ENCODE measurements at regions of chr12 and their contacts with region 1.

Region 1: GRCh38 chr12:11836282-11837151 is 187.0 kb downstream of the ETV6 start:
- DNase-seq: peak; percentile 88
- H3K4me3 Mint-ChIP-seq: peak overlapping the region; percentile 54
- H3K27ac Mint-ChIP-seq: peak overlapping the region; percentile 98
- H3K4me1 Mint-ChIP-seq: peaks cover 85% of the 10 kb centered on the region
- H3K27me3 Mint-ChIP-seq: no peaks in the 10 kb centered on the region

Region 2: DNA sequence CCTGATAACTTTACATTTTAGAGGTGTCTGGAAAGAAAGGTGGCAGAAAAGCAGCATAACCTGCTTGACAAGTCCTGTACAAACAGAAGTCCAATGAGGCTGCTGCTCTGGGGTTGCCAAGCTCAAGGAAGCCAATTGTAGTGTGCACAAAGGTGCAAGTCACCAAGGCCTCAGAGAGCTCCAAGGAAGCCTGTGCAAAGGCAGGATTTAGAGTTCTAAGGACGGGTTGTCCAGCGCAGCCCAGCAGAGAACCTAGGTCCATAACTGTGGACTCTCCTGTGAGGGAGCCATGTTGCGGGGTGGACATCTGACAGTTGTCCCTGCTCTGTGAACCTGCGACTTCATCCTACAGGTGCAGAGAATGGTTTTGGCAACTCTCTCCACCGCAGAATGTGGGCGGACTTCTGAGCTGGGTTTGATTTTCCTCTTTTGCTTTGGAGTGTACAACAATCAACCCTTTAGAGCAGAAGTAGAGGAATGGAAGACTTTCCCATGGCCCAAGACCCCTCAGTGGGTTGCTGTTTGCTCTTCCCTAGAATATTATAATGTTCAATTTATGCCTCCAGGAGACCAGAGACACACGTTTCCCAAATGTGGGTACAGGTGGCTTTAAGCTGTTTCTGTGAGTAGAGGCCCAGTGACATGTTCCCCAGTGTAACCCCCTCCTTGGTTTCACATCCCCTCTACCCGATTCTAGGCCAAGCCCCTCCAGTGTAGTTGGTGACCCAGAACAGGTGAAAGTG is 106.0 kb before region 1 on chr12:
- CTCF ChIA-PET with region 1: no interaction called
- POLR2A ChIA-PET with region 1: interaction called, 6 read pairs
- intact Hi-C with region 1: loop called (anchors 1 kb)
- DNase-seq: peak; percentile 10
- H3K4me3 Mint-ChIP-seq: no peak overlapping the region
- H3K27ac Mint-ChIP-seq: peak overlapping the region; percentile 62
- H3K4me1 Mint-ChIP-seq: peaks cover 76% of the 10 kb centered on the region
- H3K27me3 Mint-ChIP-seq: no peaks in the 10 kb centered on the region

Region 3: GRCh38 chr12:11780521-11781101 is 55.9 kb before region 1 on chr12:
- CTCF ChIA-PET with region 1: no interaction called
- POLR2A ChIA-PET with region 1: interaction called, 13 read pairs
- intact Hi-C with region 1: loop called (anchors 1 kb)
- DNase-seq: peak; percentile 34
- H3K4me3 Mint-ChIP-seq: no peak overlapping the region
- H3K27ac Mint-ChIP-seq: peak overlapping the region; percentile 89
- H3K4me1 Mint-ChIP-seq: peaks cover 83% of the 10 kb centered on the region
- H3K27me3 Mint-ChIP-seq: no peaks in the 10 kb centered on the region

Region 4: GRCh38 chr12:11822081-11822834 is 14.3 kb before region 1 on chr12:
- CTCF ChIA-PET with region 1: no interaction called
- POLR2A ChIA-PET with region 1: interaction called, 7 read pairs
- intact Hi-C with region 1: loop called (anchors 1 kb)
- DNase-seq: peak; percentile 83
- H3K4me3 Mint-ChIP-seq: peak overlapping the region; percentile 49
- H3K27ac Mint-ChIP-seq: peak overlapping the region; percentile 87
- H3K4me1 Mint-ChIP-seq: peaks cover 66% of the 10 kb centered on the region
- H3K27me3 Mint-ChIP-seq: no peaks in the 10 kb centered on the region

Region 5: DNA sequence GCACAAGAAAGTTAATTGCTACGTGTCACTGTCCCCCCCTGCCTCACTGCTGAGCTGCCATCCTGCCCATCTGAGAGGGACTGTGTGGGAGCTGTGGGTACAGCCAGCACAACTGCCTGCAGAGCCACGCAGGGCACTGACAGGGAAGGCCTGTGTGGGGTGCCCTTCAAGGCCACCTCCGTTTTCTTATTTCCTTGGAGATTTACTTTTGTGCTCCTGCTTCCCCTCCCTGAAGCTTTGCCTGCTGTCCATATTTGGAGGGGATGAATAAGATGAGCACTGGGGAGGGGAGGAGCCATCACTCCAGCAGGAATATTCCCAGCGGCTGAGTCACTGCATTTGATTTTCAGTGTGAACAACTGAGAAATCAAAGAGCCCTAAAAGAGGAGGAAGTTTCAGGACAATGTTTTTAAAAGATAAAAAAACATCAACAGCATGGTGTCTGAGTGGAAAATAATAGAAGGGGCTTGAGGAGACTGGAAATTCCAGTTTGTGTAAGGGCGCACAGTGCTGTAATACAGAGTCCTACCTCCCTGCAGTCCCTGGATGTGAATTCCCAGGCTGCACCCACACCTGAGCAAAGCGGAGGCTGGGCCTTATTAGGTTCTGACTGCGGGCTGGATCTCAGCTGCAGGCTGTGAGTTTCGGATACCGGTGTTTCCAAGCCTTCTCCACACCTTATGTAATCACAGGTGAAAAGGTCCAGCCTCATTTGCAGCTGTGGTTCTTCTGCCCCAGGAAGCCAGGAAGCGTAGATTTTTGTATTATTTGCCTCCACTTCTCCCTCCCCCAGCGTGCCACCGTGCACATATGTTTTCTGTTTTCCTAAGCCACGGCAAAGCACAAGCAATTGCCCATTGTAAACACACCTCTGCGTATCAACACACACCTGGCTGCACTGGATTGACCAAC is 41.6 kb after region 1 on chr12:
- CTCF ChIA-PET with region 1: no interaction called
- POLR2A ChIA-PET with region 1: no interaction called
- intact Hi-C with region 1: loop called (anchors 1 kb)
- DNase-seq: peak; percentile 37
- H3K4me3 Mint-ChIP-seq: no peak overlapping the region
- H3K27ac Mint-ChIP-seq: peak overlapping the region; percentile 55
- H3K4me1 Mint-ChIP-seq: peaks cover 51% of the 10 kb centered on the region
- H3K27me3 Mint-ChIP-seq: no peaks in the 10 kb centered on the region

Region 6: DNA sequence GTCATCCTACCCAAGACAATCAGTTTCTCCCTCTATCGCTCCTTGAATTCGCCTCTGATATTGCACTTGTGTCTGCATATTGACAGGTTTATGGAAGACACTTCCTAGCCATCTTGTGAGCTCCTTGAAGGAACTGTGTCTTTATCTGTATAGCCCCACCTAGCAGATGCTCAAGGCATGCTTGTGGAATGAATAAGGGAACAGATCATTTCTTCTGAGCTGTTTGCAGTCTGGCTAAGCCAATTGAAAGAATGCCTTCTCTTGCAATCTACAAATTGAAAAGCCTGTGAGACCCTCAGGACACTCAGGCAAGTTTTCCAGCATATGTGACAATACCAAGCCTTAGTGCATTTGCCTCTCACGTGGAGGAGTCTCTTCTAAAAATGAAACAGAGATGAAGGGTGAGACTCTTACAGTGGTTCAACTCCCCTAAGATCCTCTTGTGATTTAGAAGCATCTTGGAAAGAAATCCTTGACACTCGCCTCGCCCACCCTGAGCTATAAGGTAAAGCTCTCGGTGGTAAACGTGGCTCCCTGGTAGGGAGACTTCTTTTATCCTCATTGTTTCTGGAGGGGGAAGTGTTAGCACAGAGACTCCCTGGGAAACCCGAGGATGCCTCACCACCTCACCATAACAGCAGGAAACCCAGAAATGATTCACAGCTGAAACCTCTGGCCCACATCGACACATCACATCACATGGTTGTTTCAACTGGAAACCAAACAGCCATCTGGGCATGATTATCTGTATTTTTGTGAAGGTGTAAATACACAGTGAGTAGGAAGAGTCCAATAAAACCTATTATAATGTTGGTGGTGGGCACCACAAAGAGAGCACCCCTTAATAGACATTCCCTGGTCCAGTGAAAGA is 121.9 kb after region 1 on chr12:
- CTCF ChIA-PET with region 1: no interaction called
- POLR2A ChIA-PET with region 1: no interaction called
- intact Hi-C with region 1: loop called (anchors 1 kb)
- DNase-seq: peak; percentile 80
- H3K4me3 Mint-ChIP-seq: peak overlapping the region; percentile 50
- H3K27ac Mint-ChIP-seq: peak overlapping the region; percentile 90
- H3K4me1 Mint-ChIP-seq: peaks cover 37% of the 10 kb centered on the region
- H3K27me3 Mint-ChIP-seq: no peaks in the 10 kb centered on the region

Region 7: GRCh38 chr12:12115514-12115913 is 279.0 kb after region 1 on chr12:
- CTCF ChIA-PET with region 1: no interaction called
- POLR2A ChIA-PET with region 1: no interaction called
- intact Hi-C with region 1: no loop called
- DNase-seq: no peak
- H3K4me3 Mint-ChIP-seq: no peak overlapping the region
- H3K27ac Mint-ChIP-seq: no peak overlapping the region
- H3K4me1 Mint-ChIP-seq: no peaks in the 10 kb centered on the region
- H3K27me3 Mint-ChIP-seq: peaks cover 3% of the 10 kb centered on the region

Measured in activated CD4-positive, alpha-beta memory T cell treated with anti-CD3 and anti-CD28 coated beads for 36 hours (primary cell).